ENCODE measurements at regions of chr5 and their contacts with region 1.

Region 1: GRCh38 chr5:136802383-136802782 is 437.0 kb upstream of the TRPC7 start:
- DNase-seq: no peak
- ATAC-seq: peak; percentile 70

Region 2: GRCh38 chr5:137051165-137051564 is 248.8 kb after region 1 on chr5:
- intact Hi-C with region 1: loop called (anchors 5 kb)
- DNase-seq: no peak
- ATAC-seq: peak; percentile 52

Region 3: GRCh38 chr5:137220523-137220927 is 418.1 kb after region 1 on chr5:
- intact Hi-C with region 1: loop called (anchors 5 kb)
- DNase-seq: no peak
- ATAC-seq: peak; percentile 57

Region 4: GRCh38 chr5:137498736-137499505 is 696.5 kb after region 1 on chr5 and contains the start of gene SPOCK1:
- intact Hi-C with region 1: loop called (anchors 10 kb)
- DNase-seq: peak; percentile 85
- ATAC-seq: peak; percentile 98
- total RNA-seq, gene SPOCK1: 19.6 TPM